ENCODE measurements at regions of chr20 and their contacts with region 1.

Region 1: DNA sequence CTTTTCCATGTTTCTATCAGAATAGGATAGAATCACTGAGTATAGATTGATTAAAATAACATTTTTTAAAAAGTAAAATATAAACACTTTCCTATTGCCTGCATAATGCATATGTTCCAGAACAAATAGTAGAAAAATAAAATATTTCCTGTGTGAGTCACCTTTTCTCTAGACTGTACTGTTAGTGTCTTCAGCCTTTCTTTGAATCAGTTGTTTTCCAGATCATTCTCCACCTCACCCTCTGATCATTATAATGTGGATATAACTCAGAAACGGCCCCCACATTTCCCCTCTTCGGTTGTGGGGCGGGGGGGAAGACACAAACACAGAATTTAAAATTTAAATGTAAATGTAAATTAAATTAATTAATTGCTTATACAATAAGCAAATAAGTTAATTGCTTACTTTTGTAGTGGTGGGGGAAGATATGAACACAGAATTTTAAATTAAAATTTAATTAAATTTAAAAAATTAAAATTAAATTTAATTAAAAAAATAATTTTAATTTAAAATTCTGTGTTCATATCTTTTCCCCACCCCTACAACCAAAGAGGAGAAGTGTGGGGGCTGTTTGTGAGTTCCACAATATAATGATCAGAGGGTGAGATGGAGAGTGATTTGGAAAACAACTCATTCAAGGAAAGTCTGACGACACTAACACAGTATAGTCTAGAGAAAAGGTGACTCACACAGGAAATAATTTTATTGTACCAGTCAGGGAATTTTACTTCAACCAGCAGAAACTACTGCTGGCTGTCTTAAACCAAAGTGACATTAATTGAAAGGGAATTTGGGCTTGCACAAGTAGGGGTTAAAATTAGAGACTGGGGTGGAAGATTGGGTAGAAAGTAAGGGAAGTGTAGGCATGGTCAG is 37.1 kb upstream of the PROKR2 start:
- DNase-seq: no peak

Region 2: DNA sequence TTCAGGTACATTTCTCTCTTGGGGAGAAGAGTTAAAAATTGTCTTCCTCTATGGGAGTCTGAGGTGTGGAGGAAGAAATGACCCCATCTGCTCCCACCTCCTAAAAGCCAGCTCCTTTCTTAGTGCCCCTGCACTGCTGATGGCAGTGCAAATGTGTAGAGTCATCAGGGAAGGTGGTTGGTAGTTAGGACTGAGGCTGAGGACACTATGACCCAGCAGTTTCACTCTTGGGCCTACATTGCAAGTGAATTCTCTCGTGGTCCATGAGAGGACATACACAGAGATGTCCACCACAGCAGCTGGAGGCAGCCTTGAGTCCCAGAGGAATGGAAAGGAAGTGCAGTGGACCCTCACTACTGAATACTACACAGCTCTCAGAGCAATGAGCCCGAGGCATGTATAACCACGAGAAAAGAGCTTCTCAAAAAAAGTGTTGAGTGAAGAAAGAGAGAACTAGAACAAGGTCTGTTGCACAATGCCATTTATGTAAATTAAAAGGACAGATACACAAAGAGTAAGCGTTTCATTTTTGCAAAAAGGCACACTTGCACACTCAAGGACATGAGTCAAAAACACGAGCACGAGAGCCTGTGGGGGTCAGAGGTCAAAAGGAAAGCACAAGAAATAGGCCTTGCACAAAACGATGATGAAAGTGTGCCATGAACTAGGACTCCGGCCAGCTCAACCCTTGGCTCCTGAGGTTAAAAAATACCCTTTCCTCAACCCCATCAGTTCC is 940.4 kb before region 1 on chr20:
- intact Hi-C with region 1: loop called in 1 of 2 experiments (anchors 5 kb)
- DNase-seq: no peak

Region 3: GRCh38 chr20:5171064-5171789 is 182.6 kb before region 1 on chr20:
- intact Hi-C with region 1: no loop called
- DNase-seq: no peak

Region 4: GRCh38 chr20:6295127-6295866 is 941.4 kb after region 1 on chr20:
- intact Hi-C with region 1: no loop called
- DNase-seq: no peak

Measured in posterior vena cava (tissue), 2 donors.